Transverse colon (tissue), 4 donors: ENCODE measurements at regions of chr1 and their contacts with region 1.

Region 1: GRCh38 chr1:1291548-1292441 is 11.6 kb downstream of the SCNN1D start:
- DNase-seq: peak; percentile 85
- H3K4me3 ChIP-seq: no peak overlapping the region
- H3K27ac ChIP-seq: no peak overlapping the region
- H3K4me1 ChIP-seq: peaks cover 0 to 12% (median 10%) of the 10 kb centered on the region in 4 donors
- H3K27me3 ChIP-seq: peaks cover 12% of the 10 kb centered on the region
- CTCF ChIP-seq: peak; percentile 61 to 91 (median 70)
- EP300 ChIP-seq: no peak
- POLR2A ChIP-seq: no peak

Region 2: GRCh38 chr1:1122078-1122811 is 169.6 kb before region 1 on chr1:
- in situ Hi-C with region 1: no loop called
- intact Hi-C with region 1: loop called (anchors 2 kb)
- DNase-seq: peak; percentile 90
- H3K4me3 ChIP-seq: peak overlapping the region in 3 of 4 donors; percentile 11 to 38 (median 33)
- H3K27ac ChIP-seq: peak overlapping the region; percentile 84 to 93 (median 92)
- H3K4me1 ChIP-seq: peaks cover 10 to 47% (median 39%) of the 10 kb centered on the region in 4 donors
- H3K27me3 ChIP-seq: peaks cover 15% of the 10 kb centered on the region
- CTCF ChIP-seq: peak; percentile 90 to 98 (median 92)
- EP300 ChIP-seq: no peak
- POLR2A ChIP-seq: no peak

Region 3: GRCh38 chr1:1164701-1165451 is 126.9 kb before region 1 on chr1:
- in situ Hi-C with region 1: no loop called
- intact Hi-C with region 1: no loop called
- DNase-seq: peak; percentile 67
- H3K4me3 ChIP-seq: peak overlapping the region; percentile 4 to 63 (median 50)
- H3K27ac ChIP-seq: peak overlapping the region; percentile 96 to 98 (median 97)
- H3K4me1 ChIP-seq: peaks cover 0 to 47% (median 22%) of the 10 kb centered on the region in 4 donors
- H3K27me3 ChIP-seq: peaks cover 16% of the 10 kb centered on the region
- CTCF ChIP-seq: no peak
- EP300 ChIP-seq: no peak
- POLR2A ChIP-seq: peak; percentile 76